Astrocyte of the cerebellum (primary cell): ENCODE measurements at regions of chr5 and their contacts with region 1.

Region 1: GRCh38 chr5:163564321-163564938 is 59.0 kb downstream of the MAT2B start:
- DNase-seq: peak; percentile 56
- H3K4me3 ChIP-seq: no peak overlapping the region
- CTCF ChIP-seq: peak; percentile 78

Region 2: GRCh38 chr5:162796507-162796906 is 767.9 kb before region 1 on chr5:
- in situ Hi-C with region 1: no loop called
- DNase-seq: no peak
- H3K4me3 ChIP-seq: no peak overlapping the region
- CTCF ChIP-seq: no peak

Region 3: GRCh38 chr5:164013077-164013670 is 448.7 kb after region 1 on chr5:
- in situ Hi-C with region 1: loop called (anchors 25 kb)
- DNase-seq: peak; percentile 77
- H3K4me3 ChIP-seq: no peak overlapping the region
- CTCF ChIP-seq: peak; percentile 60

Region 4: DNA sequence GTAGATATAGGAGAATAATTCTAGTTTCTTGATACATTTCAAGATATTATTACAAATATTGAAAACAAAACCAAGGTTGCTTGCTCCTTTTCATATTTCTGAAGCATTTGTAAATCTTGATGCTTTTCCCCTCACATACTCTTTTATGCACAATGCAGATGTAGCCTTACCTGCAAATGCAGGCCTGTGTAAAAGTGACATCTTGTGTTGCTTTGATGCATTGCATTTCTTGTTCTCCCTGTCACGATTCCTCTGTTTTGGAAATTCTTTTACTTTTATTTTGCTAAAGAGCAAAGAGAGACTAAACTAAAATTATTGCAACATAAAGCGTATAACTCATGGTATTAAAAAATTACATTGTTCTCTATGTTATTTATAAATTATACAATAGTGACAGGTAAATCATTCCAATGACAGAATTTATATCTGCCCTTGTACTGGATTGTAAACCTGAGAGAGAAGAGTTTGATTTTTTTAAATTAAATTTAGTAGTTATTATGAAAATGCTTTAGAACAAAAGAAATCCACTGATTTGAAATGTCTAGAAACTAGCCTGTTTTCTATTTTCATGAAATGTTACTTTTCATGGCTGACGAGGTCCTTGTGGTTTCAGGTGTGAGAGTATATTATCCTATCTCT is 911.0 kb after region 1 on chr5:
- in situ Hi-C with region 1: loop called (anchors 25 kb)
- DNase-seq: peak; percentile 23
- H3K4me3 ChIP-seq: no peak overlapping the region
- CTCF ChIP-seq: peak; percentile 77